HepG2 (cell line): ENCODE measurements at regions of chr2 and their contacts with region 1.

Region 1: GRCh38 chr2:108169982-108170625 is 69.7 kb upstream of the SULT1C3 start:
- DNase-seq: peak; percentile 31
- ATAC-seq: peak; percentile 71
- H3K4me3 ChIP-seq: no peak overlapping the region
- H3K27ac ChIP-seq: no peak overlapping the region
- H3K4me1 ChIP-seq: no peaks in the 10 kb centered on the region
- H3K27me3 ChIP-seq: no peaks in the 10 kb centered on the region
- CTCF ChIP-seq: peak; percentile 58
- EP300 ChIP-seq: no peak
- POLR2A ChIP-seq: no peak
- RAD21 ChIP-seq: no peak

Region 2: DNA sequence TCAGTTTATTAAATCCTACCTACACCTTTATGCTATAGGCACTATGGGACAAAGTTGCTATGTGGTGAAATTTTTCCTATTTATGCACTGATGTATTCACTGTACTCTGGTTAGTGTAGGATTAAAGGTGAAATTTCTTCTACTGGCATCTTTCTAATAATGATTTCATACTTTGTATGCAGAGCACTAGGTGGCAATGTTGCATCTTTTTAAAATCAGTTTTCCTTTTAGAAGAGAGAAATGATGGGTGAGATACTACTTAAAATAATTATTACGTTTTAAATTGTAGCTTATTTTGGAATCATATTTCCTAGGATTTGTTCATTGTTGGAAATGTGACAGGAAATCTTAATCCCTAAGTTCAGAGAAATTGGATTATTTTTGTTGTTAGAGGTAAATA is 1532.1 kb before region 1 on chr2:
- CTCF ChIA-PET with region 1: no interaction called
- POLR2A ChIA-PET with region 1: no interaction called
- in situ Hi-C with region 1: loop called (anchors 25 kb)
- intact Hi-C with region 1: no loop called
- DNase-seq: no peak
- ATAC-seq: no peak
- H3K4me3 ChIP-seq: no peak overlapping the region
- H3K27ac ChIP-seq: no peak overlapping the region
- H3K4me1 ChIP-seq: no peaks in the 10 kb centered on the region
- H3K27me3 ChIP-seq: peaks cover 0 to 13% of the 10 kb centered on the region in 2 experiments; a peak in 2 of 5 replicates
- CTCF ChIP-seq: peak; percentile 38
- EP300 ChIP-seq: no peak
- POLR2A ChIP-seq: no peak
- RAD21 ChIP-seq: no peak

Region 3: DNA sequence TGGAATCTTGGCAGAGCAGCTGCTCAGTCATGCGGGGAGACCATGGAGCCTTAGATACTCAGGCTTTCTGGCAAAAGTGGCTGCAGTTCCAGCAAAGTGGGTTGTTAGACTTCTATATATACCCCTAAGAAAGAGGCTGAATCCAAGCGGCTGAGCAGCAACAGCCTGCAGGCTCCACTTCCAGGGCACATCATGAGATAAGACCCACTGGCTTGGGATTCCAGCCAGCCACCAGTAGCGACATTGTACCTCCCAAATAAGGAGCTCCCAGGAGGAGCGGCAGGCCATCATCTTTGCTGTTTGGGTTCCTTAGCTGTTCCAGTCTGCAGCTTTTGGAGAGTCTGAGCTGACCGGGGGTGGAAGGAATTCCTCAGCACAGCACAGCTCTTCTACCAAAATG is 1133.8 kb before region 1 on chr2:
- CTCF ChIA-PET with region 1: no interaction called
- POLR2A ChIA-PET with region 1: no interaction called
- in situ Hi-C with region 1: no loop called
- intact Hi-C with region 1: no loop called
- DNase-seq: no peak
- ATAC-seq: no peak
- H3K4me3 ChIP-seq: no peak overlapping the region
- H3K27ac ChIP-seq: no peak overlapping the region
- H3K4me1 ChIP-seq: no peaks in the 10 kb centered on the region
- H3K27me3 ChIP-seq: no peaks in the 10 kb centered on the region
- CTCF ChIP-seq: no peak
- EP300 ChIP-seq: no peak
- POLR2A ChIP-seq: no peak
- RAD21 ChIP-seq: no peak

Region 4: GRCh38 chr2:107569496-107569895 is 600.6 kb before region 1 on chr2:
- CTCF ChIA-PET with region 1: no interaction called
- POLR2A ChIA-PET with region 1: no interaction called
- in situ Hi-C with region 1: no loop called
- intact Hi-C with region 1: loop called (anchors 2 kb)
- DNase-seq: no peak
- ATAC-seq: no peak
- H3K4me3 ChIP-seq: no peak overlapping the region
- H3K27ac ChIP-seq: no peak overlapping the region
- H3K4me1 ChIP-seq: no peaks in the 10 kb centered on the region
- H3K27me3 ChIP-seq: no peaks in the 10 kb centered on the region
- CTCF ChIP-seq: no peak
- EP300 ChIP-seq: no peak
- POLR2A ChIP-seq: no peak
- RAD21 ChIP-seq: no peak

Region 5: GRCh38 chr2:108324531-108325251 is 154.6 kb after region 1 on chr2:
- CTCF ChIA-PET with region 1: no interaction called
- POLR2A ChIA-PET with region 1: no interaction called
- in situ Hi-C with region 1: no loop called
- intact Hi-C with region 1: no loop called
- DNase-seq: no peak
- ATAC-seq: no peak
- H3K4me3 ChIP-seq: no peak overlapping the region
- H3K27ac ChIP-seq: no peak overlapping the region
- H3K4me1 ChIP-seq: no peaks in the 10 kb centered on the region
- H3K27me3 ChIP-seq: 0 out of 5 replicates have a peak, but pooled peaks cover 0 to 3% of the 10 kb centered on the region in 2 experiments
- CTCF ChIP-seq: no peak
- EP300 ChIP-seq: no peak
- POLR2A ChIP-seq: no peak
- RAD21 ChIP-seq: no peak

Region 6: DNA sequence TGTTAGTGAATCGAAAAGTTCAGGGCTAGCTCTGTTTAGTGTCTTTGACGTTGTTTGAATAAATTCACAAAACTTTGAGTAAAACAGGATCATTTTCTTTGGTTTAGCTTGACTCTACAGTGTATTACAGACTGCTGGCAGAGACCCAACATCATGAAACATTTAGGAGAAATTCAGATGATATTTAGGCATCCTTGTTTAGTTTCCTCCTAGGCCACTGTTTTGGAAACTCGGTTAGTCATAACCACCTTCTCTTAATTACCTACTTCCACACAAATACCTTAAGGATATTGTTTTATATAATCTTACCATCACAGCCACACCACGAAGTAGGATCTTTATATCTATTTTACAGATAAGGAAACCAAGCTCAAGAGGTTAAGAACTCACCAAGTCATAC is 372.0 kb after region 1 on chr2:
- CTCF ChIA-PET with region 1: no interaction called
- POLR2A ChIA-PET with region 1: no interaction called
- in situ Hi-C with region 1: no loop called
- intact Hi-C with region 1: no loop called
- DNase-seq: no peak
- ATAC-seq: no peak
- H3K4me3 ChIP-seq: no peak overlapping the region
- H3K27ac ChIP-seq: no peak overlapping the region
- H3K4me1 ChIP-seq: peaks cover 49% of the 10 kb centered on the region
- H3K27me3 ChIP-seq: no peaks in the 10 kb centered on the region
- CTCF ChIP-seq: no peak
- EP300 ChIP-seq: no peak
- POLR2A ChIP-seq: no peak
- RAD21 ChIP-seq: no peak